ENCODE measurements at regions of chr14 and their contacts with region 1.

Region 1: GRCh38 chr14:49633640-49634546 is 1.2 kb downstream of the DNAAF2 start:
- DNase-seq: peak; percentile 91 to 97
- H3K4me3 ChIP-seq: peak overlapping the region; percentile 88 to 98 (median 94)
- H3K27ac ChIP-seq: peak overlapping the region; percentile 95
- H3K4me1 ChIP-seq: no peaks in the 10 kb centered on the region
- H3K27me3 ChIP-seq: no peaks in the 10 kb centered on the region
- CTCF ChIP-seq: peak; percentile 84 to 86 (median 85)
- EP300 ChIP-seq: 0 out of 3 replicates have a peak, but pooled peaks of 1 of the 2 experiments have one; percentile 9
- POLR2A ChIP-seq: peak; percentile 69 to 86
- RAD21 ChIP-seq: peak; percentile 71 to 82

Region 2: DNA sequence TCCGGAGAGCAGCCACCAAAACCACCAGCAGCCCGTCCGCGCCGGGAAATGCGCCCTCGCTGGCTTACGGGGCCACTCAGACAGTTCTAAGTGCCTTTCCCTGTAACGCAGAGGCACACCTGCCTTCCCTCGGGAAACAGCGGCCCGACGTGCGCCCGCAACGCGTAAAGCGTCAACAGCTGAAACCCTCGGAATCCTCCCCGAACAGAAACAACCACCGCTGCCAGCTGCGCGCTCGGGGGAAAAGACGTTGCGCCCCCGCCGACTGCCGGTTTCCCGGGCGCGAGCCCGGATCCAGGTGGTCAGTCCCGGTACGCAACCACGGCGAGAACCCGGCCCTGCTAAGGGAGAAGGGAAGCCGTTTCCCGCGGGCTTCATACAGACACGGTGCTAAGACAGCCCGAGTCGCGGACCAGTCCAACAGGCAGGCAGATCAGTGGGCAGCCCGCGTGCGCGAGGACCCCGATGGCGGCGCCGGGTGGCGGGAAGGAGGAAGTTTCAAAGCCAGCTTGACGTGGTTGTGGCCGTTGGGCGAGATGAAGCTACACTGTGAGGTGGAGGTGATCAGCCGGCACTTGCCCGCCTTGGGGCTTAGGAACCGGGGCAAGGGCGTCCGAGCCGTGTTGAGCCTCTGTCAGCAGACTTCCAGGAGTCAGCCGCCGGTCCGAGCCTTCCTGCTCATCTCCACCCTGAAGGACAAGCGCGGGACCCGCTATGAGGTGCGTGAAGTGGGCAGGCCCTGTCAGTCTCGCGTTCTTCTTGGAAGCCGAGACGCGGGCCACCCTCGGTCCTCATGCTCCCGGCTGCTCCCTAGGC is 35.2 kb before region 1 on chr14 and contains the start of gene LRR1:
- CTCF ChIA-PET with region 1: interaction called, 3 read pairs
- POLR2A ChIA-PET with region 1: interaction called, 14 read pairs
- DNase-seq: peak in 1 of 2 experiments; percentile 96
- H3K4me3 ChIP-seq: peak within 1 kb of the TSS; percentile 61 to 98 (median 92)
- H3K27ac ChIP-seq: peak within 1 kb of the TSS; percentile 95
- H3K4me1 ChIP-seq: 0 out of 7 replicates have a peak, but pooled peaks cover 0 to 2% (median 0%) of the 10 kb centered on the region in 4 experiments
- H3K27me3 ChIP-seq: no peaks in the 10 kb centered on the region
- CTCF ChIP-seq: no peak
- EP300 ChIP-seq: no peak
- POLR2A ChIP-seq: peak; percentile 45 to 96
- RAD21 ChIP-seq: no peak
- total RNA-seq, gene LRR1: 37.5 and 37.7 TPM in 2 replicates

Region 3: DNA sequence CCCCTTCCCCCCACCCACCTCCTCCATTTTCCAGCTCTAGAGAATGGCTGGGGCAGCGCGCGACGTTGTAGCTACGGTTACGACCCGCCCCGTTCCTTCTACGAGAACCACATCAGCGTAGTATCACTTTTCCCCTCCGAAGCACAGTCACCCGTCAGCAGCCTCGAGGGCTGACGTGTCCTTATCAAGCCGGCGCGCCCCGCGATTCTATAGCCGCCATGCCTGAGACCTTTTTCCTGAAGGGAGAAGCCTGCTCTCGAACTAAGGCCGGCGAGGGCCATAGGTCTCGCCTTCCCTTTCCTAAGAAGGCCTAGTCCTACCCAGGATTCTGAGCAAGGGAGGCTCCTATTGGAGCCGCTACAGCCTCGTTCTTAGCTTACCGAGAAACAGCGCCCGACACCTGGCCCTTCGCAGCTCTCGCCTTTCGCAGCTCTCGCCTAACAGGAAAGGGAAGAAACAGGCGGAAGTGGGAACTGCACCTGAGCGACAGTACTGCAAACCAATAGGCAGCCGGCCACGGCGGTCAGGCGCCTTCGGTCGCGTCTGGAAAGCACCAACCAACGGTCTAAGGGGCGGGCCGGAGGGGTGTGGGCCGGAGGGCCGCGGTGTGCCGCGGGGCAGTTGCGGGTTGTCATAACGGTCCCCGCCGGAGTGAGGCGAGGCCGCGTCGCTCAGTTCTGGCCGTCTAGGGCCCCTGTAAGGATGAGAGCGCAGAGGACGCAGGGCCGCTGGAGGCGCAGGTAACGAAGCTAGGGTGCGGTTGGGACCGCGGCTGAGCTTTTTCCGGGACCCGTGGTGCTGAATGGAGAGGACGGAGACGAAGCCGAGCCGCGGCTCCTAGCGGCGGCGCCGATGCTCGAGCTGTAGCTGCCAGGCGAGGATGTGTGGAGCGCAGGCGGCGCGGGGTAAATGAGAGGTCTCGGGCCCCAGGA is 13.4 kb before region 1 on chr14 and contains the starts of genes MGAT2 and RPL36AL:
- CTCF ChIA-PET with region 1: interaction called, 15 read pairs
- POLR2A ChIA-PET with region 1: interaction called, 47 read pairs
- DNase-seq: peak; percentile 92 to 97
- H3K4me3 ChIP-seq: peak within 1 kb of the TSS; percentile 80 to 99 (median 94)
- H3K27ac ChIP-seq: peak within 1 kb of the TSS; percentile 95
- H3K4me1 ChIP-seq: peaks cover 1 to 9% (median 3%) of the 10 kb centered on the region in 4 experiments; a peak in 3 of 7 replicates
- H3K27me3 ChIP-seq: no peaks in the 10 kb centered on the region
- CTCF ChIP-seq: peak in 1 of 3 experiments; percentile 7; a peak in 1 of 4 replicates
- EP300 ChIP-seq: no peak
- POLR2A ChIP-seq: peak; percentile 87 to 91
- RAD21 ChIP-seq: 0 out of 4 replicates have a peak, but pooled peaks of 1 of the 2 experiments have one; percentile 1
- total RNA-seq, gene MGAT2: 23.7 and 24.5 TPM in 2 replicates
- total RNA-seq, gene RPL36AL: 230 and 233 TPM in 2 replicates

Region 4: GRCh38 chr14:49692811-49693734 is 59.2 kb after region 1 on chr14 and contains the start of gene KLHDC1:
- CTCF ChIA-PET with region 1: interaction called, 4 read pairs
- POLR2A ChIA-PET with region 1: interaction called, 28 read pairs
- DNase-seq: peak in 1 of 2 experiments; percentile 77
- H3K4me3 ChIP-seq: peak within 1 kb of the TSS; percentile 58 to 89 (median 76)
- H3K27ac ChIP-seq: peak within 1 kb of the TSS; percentile 33; the same call in 1 of the 2 replicates
- H3K4me1 ChIP-seq: peaks cover 0 to 9% (median 4%) of the 10 kb centered on the region in 4 experiments; a peak in 6 of 7 replicates
- H3K27me3 ChIP-seq: peaks cover 0 to 13% (median 7%) of the 10 kb centered on the region in 4 experiments
- CTCF ChIP-seq: no peak
- EP300 ChIP-seq: no peak
- POLR2A ChIP-seq: peak; percentile 55 to 58; a peak in 2 of 3 replicates
- RAD21 ChIP-seq: no peak
- total RNA-seq, gene KLHDC1: not detected in 2 replicates